Common myeloid progenitor, CD34-positive (primary cell): ENCODE measurements at regions of chr4 and their contacts with region 1.

Region 1: DNA sequence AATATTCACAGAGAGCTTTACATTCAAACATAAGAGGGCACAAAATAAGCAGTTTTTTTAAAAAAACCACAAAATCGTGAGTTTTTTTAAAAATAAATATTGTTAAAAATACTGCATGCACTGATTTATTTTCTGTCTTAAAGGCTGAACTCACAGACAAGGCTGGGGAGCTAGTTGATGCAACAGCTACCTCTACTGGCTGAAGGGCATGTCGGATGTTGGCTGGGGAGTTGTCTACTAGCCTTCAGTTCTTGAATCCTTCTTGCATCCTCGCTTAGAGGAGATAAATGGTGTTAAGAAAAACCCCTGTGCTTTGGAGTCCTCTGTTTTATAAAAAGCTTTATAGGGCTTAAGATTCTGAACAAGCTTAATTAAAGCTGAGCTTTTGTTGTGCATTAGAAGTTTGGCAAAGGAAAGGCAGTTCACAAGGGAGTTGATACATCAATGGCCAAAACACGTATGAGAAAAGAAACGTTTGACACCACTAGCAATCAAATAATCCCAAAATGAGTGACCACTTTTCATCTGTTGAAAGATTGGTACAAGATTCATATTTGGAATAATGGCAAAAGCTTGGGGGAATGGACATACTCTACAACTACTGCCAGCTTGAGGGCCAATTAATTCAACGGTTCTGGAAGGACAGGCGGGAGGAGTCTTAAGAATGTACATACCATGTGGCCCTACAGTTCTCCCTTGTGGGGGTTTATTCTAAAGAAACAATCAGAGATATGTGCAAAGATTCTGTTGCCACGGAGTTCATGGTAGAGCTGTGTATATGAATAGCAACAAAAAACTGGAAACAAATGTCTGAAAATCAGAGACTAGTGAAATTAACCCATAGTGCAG is 94.7 kb downstream of the SEL1L3 start:
- DNase-seq: peak; percentile 31 to 70 (median 68)
- H3K4me3 ChIP-seq: no peak overlapping the region
- H3K27ac ChIP-seq: no peak overlapping the region
- H3K4me1 ChIP-seq: no peaks in the 10 kb centered on the region
- H3K27me3 ChIP-seq: no peaks in the 10 kb centered on the region

Region 2: GRCh38 chr4:25439918-25440477 is 328.1 kb before region 1 on chr4:
- CTCF ChIA-PET with region 1: interaction called, 38 read pairs
- POLR2A ChIA-PET with region 1: no interaction called
- DNase-seq: peak; percentile 51 to 74 (median 72)
- H3K4me3 ChIP-seq: no peak overlapping the region
- H3K27ac ChIP-seq: no peak overlapping the region
- H3K4me1 ChIP-seq: no peaks in the 10 kb centered on the region
- H3K27me3 ChIP-seq: no peaks in the 10 kb centered on the region

Region 3: DNA sequence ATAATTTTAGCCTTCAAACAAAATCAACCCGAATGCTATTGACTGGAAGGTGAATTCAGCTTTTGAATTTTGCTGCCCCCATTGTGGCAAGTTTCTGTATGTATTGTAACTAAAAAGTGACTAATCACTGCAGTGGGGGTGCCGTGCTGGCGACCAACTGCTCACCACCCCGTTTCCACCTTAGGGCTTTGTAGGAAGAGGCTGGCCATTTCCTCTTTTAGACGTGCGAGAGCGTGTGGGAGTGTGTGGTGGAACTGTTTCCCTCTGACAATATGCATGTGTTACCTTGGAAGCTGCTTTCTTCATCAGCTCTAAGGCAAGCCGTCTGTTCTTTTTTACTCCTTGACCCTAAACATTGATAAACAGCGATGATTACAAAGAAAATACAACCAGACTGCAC is 15.8 kb after region 1 on chr4:
- CTCF ChIA-PET with region 1: interaction called, 11 read pairs
- POLR2A ChIA-PET with region 1: no interaction called
- DNase-seq: peak; percentile 44 to 88 (median 82)
- H3K4me3 ChIP-seq: no peak overlapping the region
- H3K27ac ChIP-seq: no peak overlapping the region
- H3K4me1 ChIP-seq: peaks cover 0 to 51% (median 37%) of the 10 kb centered on the region in 4 experiments
- H3K27me3 ChIP-seq: no peaks in the 10 kb centered on the region